Mammary epithelial cell (primary cell): ENCODE measurements at regions of chr12 and their contacts with region 1.

Region 1: DNA sequence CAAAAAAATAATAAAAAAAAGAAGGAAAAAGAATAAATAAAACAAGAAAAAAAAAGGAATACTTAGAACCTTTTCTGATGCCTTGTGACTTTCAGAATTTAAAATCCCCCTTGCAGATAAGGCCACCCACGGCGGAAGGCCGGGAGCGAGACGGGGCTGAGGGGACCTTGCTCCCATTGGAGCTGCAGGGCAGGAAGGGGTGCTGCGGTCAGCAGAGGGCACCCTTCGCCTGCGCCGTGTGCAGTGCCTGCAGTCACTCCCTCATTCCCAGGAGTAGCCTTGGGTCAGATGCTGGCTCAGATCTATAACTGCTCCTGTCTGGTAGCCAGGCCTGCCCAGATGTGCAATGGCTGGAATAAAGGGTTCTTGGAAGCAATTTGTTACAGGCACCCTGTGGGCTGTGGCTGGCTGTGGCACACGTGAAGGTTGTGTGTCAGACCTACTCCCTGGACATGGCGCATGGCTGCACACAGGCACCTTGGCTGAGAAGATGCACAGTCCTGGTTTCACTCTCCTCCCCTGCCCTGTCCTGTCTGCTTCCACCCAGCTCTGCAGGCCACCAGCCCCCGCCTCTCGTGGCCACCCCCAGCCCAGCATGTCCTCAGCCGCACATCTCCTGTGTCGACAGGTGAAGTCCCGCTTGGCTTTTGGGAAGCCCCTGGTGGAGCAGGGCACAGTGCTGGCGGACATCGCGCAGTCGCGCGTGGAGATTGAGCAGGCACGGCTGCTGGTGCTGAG is 13.4 kb upstream of the ALDH2 start:
- DNase-seq: no peak
- H3K4me3 ChIP-seq: no peak overlapping the region
- H3K27ac ChIP-seq: no peak overlapping the region
- H3K4me1 ChIP-seq: peaks cover 10% of the 10 kb centered on the region
- H3K27me3 ChIP-seq: no peaks in the 10 kb centered on the region
- CTCF ChIP-seq: peak; percentile 35 to 90

Region 2: GRCh38 chr12:111788178-111788654 is 34.9 kb after region 1 on chr12:
- CTCF ChIA-PET with region 1: no interaction called
- dilution Hi-C with region 1: no loop called
- in situ Hi-C with region 1: no loop called
- intact Hi-C with region 1: loop called (anchors 1 kb)
- DNase-seq: no peak
- H3K4me3 ChIP-seq: no peak overlapping the region
- H3K27ac ChIP-seq: no peak overlapping the region
- H3K4me1 ChIP-seq: no peaks in the 10 kb centered on the region
- H3K27me3 ChIP-seq: no peaks in the 10 kb centered on the region
- CTCF ChIP-seq: peak; percentile 27 to 81

Region 3: GRCh38 chr12:111812881-111813741 is 59.8 kb after region 1 on chr12:
- CTCF ChIA-PET with region 1: interaction called, 4 read pairs
- dilution Hi-C with region 1: no loop called
- in situ Hi-C with region 1: no loop called
- intact Hi-C with region 1: loop called (anchors 1 kb)
- DNase-seq: peak; percentile 68
- H3K4me3 ChIP-seq: no peak overlapping the region
- H3K27ac ChIP-seq: no peak overlapping the region
- H3K4me1 ChIP-seq: no peaks in the 10 kb centered on the region
- H3K27me3 ChIP-seq: no peaks in the 10 kb centered on the region
- CTCF ChIP-seq: peak; percentile 65 to 85